Naive thymus-derived CD4-positive, alpha-beta T cell (primary cell): ENCODE measurements at regions of chr19 and their contacts with region 1.

Region 1: GRCh38 chr19:1026189-1027019 is at the start of gene CNN2:
- DNase-seq: peak in 8 of 9 donors; percentile 49 to 85 (median 58)
- ATAC-seq: peak; percentile 49
- H3K4me3 ChIP-seq: peak within 1 kb of the TSS; percentile 99
- H3K4me3 Mint-ChIP-seq: peak within 1 kb of the TSS; percentile 93 to 99 (median 97)
- H3K27ac ChIP-seq: peak within 1 kb of the TSS; percentile 85
- H3K27ac Mint-ChIP-seq: peak within 1 kb of the TSS; percentile 88 to 98 (median 94)
- H3K4me1 ChIP-seq: peaks cover 21 to 31% of the 10 kb centered on the region in 2 donors
- H3K4me1 Mint-ChIP-seq: peaks cover 0 to 40% (median 26%) of the 10 kb centered on the region in 7 donors
- H3K27me3 ChIP-seq: no peaks in the 10 kb centered on the region
- H3K27me3 Mint-ChIP-seq: peaks cover 0 to 5% (median 0%) of the 10 kb centered on the region in 5 donors
- total RNA-seq, gene CNN2: 234 to 440 (median 240) TPM

Region 2: GRCh38 chr19:984165-984967 is 42.0 kb before region 1 on chr19 and contains the start of gene WDR18:
- CTCF ChIA-PET with region 1: interaction called, 5 read pairs
- POLR2A ChIA-PET with region 1: interaction called, 10 read pairs
- intact Hi-C with region 1: loop called in 1 of 2 experiments (anchors 1 kb)
- DNase-seq: peak; percentile 62 to 93 (median 76)
- ATAC-seq: peak; percentile 93
- H3K4me3 ChIP-seq: peak within 1 kb of the TSS; percentile 56
- H3K4me3 Mint-ChIP-seq: peak within 1 kb of the TSS; percentile 78 to 98 (median 92)
- H3K27ac ChIP-seq: peak within 1 kb of the TSS; percentile 99
- H3K27ac Mint-ChIP-seq: peak within 1 kb of the TSS; percentile 80 to 94 (median 90)
- H3K4me1 ChIP-seq: peaks cover 4 to 17% of the 10 kb centered on the region in 2 donors
- H3K4me1 Mint-ChIP-seq: peaks cover 6 to 21% (median 17%) of the 10 kb centered on the region in 7 donors
- H3K27me3 ChIP-seq: no peaks in the 10 kb centered on the region
- H3K27me3 Mint-ChIP-seq: no peaks in the 10 kb centered on the region
- total RNA-seq, gene WDR18: 20.7 to 63.8 (median 48.5) TPM

Region 3: GRCh38 chr19:1057176-1057855 is 30.9 kb after region 1 on chr19:
- CTCF ChIA-PET with region 1: no interaction called
- POLR2A ChIA-PET with region 1: interaction called, 174 read pairs
- intact Hi-C with region 1: no loop called
- DNase-seq: peak in 4 of 9 donors; percentile 35 to 54 (median 46)
- ATAC-seq: peak; percentile 67
- H3K4me3 ChIP-seq: no peak overlapping the region
- H3K4me3 Mint-ChIP-seq: peak overlapping the region in 6 of 10 donors; percentile 13 to 64 (median 48)
- H3K27ac ChIP-seq: peak overlapping the region; percentile 10
- H3K27ac Mint-ChIP-seq: peak overlapping the region; percentile 28 to 93 (median 79)
- H3K4me1 ChIP-seq: peaks cover 14 to 15% of the 10 kb centered on the region in 2 donors
- H3K4me1 Mint-ChIP-seq: peaks cover 7 to 33% (median 23%) of the 10 kb centered on the region in 7 donors
- H3K27me3 ChIP-seq: no peaks in the 10 kb centered on the region
- H3K27me3 Mint-ChIP-seq: no peaks in the 10 kb centered on the region

Region 4: GRCh38 chr19:1094975-1095701 is 68.7 kb after region 1 on chr19 and contains the start of gene POLR2E:
- CTCF ChIA-PET with region 1: no interaction called
- POLR2A ChIA-PET with region 1: interaction called, 11 read pairs
- intact Hi-C with region 1: loop called in 1 of 2 experiments (anchors 1 kb)
- DNase-seq: peak; percentile 97 to 99 (median 99)
- ATAC-seq: peak; percentile 98
- H3K4me3 ChIP-seq: peak within 1 kb of the TSS; percentile 68
- H3K4me3 Mint-ChIP-seq: peak within 1 kb of the TSS; percentile 80 to 97 (median 92)
- H3K27ac ChIP-seq: peak within 1 kb of the TSS; percentile 71
- H3K27ac Mint-ChIP-seq: peak within 1 kb of the TSS; percentile 87 to 97 (median 93)
- H3K4me1 ChIP-seq: peaks cover 18 to 23% of the 10 kb centered on the region in 2 donors
- H3K4me1 Mint-ChIP-seq: peaks cover 10 to 59% (median 44%) of the 10 kb centered on the region in 7 donors
- H3K27me3 ChIP-seq: no peaks in the 10 kb centered on the region
- H3K27me3 Mint-ChIP-seq: no peaks in the 10 kb centered on the region
- total RNA-seq, gene POLR2E: 75.3 to 157 (median 82.1) TPM